ENCODE measurements at regions of chr19 and their contacts with region 1.

Region 1: DNA sequence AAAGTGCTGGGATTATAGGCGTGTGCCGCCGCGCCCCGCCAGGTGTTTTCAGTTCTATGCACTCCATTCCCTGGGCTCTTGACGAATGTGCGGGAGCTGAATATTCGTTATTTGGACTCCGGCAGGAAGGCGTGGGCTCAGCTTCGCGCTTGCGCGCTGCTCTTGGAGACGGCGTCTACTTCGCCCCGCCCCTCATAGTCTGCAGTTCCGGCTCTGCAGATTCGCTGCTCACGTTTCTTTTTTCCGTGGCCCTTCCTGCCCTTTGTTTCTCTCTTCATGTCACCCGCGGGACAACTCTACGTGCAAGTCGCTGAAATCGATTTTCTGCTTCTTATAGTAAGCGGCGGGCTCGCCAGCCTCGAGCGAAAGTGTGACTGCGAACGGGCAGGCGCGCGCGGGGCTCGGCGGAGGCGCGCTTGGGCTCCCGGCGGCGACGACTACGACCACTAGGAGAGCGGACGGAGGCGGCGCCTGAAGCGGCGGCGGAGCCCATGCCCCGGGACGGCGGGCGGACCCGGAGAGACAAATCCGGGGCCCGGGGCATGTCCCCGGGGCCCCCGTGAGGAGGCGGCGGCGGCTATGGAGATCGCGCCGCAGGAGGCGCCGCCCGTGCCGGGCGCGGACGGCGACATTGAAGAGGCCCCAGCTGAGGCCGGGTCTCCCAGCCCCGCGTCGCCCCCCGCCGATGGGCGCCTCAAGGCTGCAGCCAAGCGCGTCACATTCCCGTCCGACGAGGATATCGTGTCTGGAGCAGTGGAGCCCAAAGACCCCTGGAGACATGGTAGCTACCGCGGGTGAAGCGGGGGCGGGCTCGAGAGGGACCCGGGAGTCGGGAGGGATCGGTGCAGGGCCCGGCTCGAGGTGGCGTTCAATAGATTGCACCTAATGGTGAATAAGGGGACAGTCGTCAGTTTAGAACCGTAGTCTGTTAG is at the start of gene PPP1R37:
- DNase-seq: peak; percentile 88
- ATAC-seq: peak; percentile 83
- H3K4me3 Mint-ChIP-seq: peak within 1 kb of the TSS; percentile 90
- H3K27ac Mint-ChIP-seq: peak within 1 kb of the TSS; percentile 98
- H3K4me1 Mint-ChIP-seq: peaks cover 50% of the 10 kb centered on the region
- H3K27me3 Mint-ChIP-seq: no peaks in the 10 kb centered on the region
- total RNA-seq, gene PPP1R37: 29.5 to 31.9 TPM

Region 2: GRCh38 chr19:45038931-45039893 is 53.8 kb before region 1 on chr19 and contains the start of gene CLASRP:
- POLR2A ChIA-PET with region 1: interaction called, 12 read pairs
- DNase-seq: peak; percentile 93
- ATAC-seq: peak; percentile 92
- H3K4me3 Mint-ChIP-seq: peak within 1 kb of the TSS; percentile 96
- H3K27ac Mint-ChIP-seq: peak within 1 kb of the TSS; percentile 97
- H3K4me1 Mint-ChIP-seq: peaks cover 25% of the 10 kb centered on the region
- H3K27me3 Mint-ChIP-seq: no peaks in the 10 kb centered on the region
- total RNA-seq, gene CLASRP: 128 to 129 TPM

Region 3: DNA sequence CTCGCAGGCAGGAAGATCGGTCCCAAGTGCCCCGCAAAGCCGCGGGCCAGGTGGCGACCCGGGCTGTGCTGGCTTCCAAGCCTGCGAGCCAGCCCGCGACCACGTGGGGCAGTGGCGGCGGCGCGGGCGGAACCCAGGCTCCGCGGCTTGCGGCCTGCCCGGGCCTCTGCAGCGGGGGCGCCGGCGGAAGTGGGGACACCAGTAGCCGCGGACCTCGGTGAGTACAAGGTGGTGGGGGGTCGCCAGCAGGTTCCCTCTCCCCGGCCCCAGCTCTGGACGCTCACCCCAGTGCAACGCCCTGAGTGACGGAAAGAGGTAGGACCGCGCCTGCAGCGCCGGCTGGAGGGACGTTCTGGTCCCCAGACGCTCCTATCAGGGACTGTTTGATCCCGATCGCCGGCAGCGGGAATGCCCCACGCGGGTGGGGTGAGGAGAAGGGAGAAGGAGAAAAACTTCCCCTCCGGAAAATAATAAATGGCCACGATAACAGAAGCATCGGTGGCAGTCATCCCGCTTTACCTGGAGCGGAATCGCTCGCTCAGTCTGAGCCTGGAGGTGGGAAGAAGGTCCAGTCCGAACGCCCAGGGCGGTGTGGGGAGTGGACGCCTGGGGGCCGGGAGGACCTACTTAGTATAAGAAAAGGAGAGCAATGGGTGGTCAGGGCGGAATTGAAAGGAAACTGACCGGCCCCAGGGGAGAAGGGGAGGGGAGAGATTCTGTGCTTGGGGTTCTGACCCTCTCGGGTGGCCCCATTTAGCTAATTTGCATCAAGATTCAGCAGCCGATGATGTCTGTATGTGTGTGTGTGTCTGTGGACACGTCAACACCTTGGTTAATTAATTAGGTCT is 13.7 kb before region 1 on chr19 and contains the start of gene GEMIN7:
- POLR2A ChIA-PET with region 1: interaction called, 15 read pairs
- DNase-seq: peak; percentile 91
- ATAC-seq: peak; percentile 50
- H3K4me3 Mint-ChIP-seq: peak within 1 kb of the TSS; percentile 96
- H3K27ac Mint-ChIP-seq: peak within 1 kb of the TSS; percentile 85
- H3K4me1 Mint-ChIP-seq: peaks cover 32% of the 10 kb centered on the region
- H3K27me3 Mint-ChIP-seq: no peaks in the 10 kb centered on the region
- total RNA-seq, gene GEMIN7: 24.8 to 26.2 TPM

Region 4: GRCh38 chr19:45103156-45103507 is 10.1 kb after region 1 on chr19:
- POLR2A ChIA-PET with region 1: interaction called, 36 read pairs
- DNase-seq: peak; percentile 66
- ATAC-seq: peak; percentile 92
- H3K4me3 Mint-ChIP-seq: peak overlapping the region; percentile 70
- H3K27ac Mint-ChIP-seq: peak overlapping the region; percentile 77
- H3K4me1 Mint-ChIP-seq: peaks cover 38% of the 10 kb centered on the region
- H3K27me3 Mint-ChIP-seq: no peaks in the 10 kb centered on the region

Region 5: GRCh38 chr19:45117669-45118068 is 24.7 kb after region 1 on chr19:
- POLR2A ChIA-PET with region 1: interaction called, 16 read pairs
- DNase-seq: peak; percentile 45
- ATAC-seq: peak; percentile 11
- H3K4me3 Mint-ChIP-seq: peak overlapping the region; percentile 69
- H3K27ac Mint-ChIP-seq: peak overlapping the region; percentile 84
- H3K4me1 Mint-ChIP-seq: peaks cover 66% of the 10 kb centered on the region
- H3K27me3 Mint-ChIP-seq: no peaks in the 10 kb centered on the region

Region 6: DNA sequence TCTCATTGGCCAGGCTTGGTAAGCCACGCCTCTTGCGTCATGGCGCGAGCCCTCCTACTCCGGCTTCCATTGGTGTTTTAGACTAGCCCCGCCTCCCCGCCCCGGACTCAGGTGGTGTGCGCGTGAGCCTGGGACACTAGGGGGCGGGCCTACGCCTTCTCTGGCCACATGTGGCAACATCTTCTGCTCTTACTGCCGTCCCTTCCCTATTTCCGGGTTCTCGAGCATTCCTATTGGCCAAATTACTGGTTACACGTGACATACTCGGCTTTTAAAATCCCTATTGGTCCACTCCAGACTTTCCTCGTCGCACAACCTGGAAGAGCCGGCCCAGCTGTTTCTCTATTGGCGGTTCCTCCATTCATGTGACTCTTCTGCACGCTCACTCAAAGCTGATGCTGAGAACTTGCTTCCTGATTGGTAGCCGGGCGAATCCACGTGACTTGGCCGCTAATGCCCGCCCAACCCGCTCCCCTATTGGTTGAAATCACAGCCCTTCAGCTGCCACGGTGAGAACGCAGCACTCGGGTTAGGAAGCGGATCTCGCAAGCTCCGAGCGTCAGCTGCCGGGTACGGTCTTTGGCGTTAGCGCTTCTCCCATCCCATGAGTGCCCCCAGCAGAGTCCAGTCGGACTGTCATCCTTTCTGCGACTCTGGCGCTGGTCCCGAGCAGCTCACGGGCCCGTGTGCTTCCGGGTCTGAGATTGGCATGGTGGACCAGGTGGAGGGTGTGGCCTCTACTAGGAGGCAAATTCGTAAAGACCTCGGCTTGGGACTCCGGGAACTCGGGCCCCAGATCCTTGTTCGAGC is 85.5 kb after region 1 on chr19 and contains the start of gene BLOC1S3:
- POLR2A ChIA-PET with region 1: interaction called, 25 read pairs
- DNase-seq: peak; percentile 99
- ATAC-seq: peak; percentile 89
- H3K4me3 Mint-ChIP-seq: peak within 1 kb of the TSS; percentile 95
- H3K27ac Mint-ChIP-seq: peak within 1 kb of the TSS; percentile 94
- H3K4me1 Mint-ChIP-seq: peaks cover 35% of the 10 kb centered on the region
- H3K27me3 Mint-ChIP-seq: no peaks in the 10 kb centered on the region
- total RNA-seq, gene BLOC1S3: 21.9 to 22.8 TPM